Esophagus muscularis mucosa (tissue), 4 donors: ENCODE measurements at regions of chr5 and their contacts with region 1.

Region 1: DNA sequence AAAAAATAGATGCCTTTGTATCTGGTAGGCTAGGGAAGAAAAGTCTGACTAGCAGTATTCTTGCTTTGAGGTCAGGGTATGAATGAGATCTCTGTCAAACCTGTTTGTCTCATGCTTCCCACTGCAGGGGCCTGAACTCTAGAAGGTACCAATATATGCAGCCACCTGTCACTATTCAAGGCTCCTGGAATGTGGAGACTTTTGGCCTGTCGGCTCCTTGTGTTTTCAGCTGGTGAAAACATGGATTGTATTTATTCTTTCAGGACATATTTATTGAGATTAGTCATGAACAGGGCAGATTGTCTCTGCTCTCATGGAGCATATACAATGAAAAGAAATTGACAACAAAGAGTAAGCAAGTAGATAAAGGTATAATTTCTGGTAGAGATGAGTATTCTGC is 255.8 kb downstream of the ARHGAP26 start:
- DNase-seq: no peak
- H3K4me3 ChIP-seq: no peak overlapping the region
- H3K27ac ChIP-seq: no peak overlapping the region
- H3K4me1 ChIP-seq: peaks cover 19 to 35% (median 26%) of the 10 kb centered on the region in 4 donors
- H3K27me3 ChIP-seq: no peaks in the 10 kb centered on the region
- CTCF ChIP-seq: no peak
- EP300 ChIP-seq: no peak
- POLR2A ChIP-seq: no peak

Region 2: DNA sequence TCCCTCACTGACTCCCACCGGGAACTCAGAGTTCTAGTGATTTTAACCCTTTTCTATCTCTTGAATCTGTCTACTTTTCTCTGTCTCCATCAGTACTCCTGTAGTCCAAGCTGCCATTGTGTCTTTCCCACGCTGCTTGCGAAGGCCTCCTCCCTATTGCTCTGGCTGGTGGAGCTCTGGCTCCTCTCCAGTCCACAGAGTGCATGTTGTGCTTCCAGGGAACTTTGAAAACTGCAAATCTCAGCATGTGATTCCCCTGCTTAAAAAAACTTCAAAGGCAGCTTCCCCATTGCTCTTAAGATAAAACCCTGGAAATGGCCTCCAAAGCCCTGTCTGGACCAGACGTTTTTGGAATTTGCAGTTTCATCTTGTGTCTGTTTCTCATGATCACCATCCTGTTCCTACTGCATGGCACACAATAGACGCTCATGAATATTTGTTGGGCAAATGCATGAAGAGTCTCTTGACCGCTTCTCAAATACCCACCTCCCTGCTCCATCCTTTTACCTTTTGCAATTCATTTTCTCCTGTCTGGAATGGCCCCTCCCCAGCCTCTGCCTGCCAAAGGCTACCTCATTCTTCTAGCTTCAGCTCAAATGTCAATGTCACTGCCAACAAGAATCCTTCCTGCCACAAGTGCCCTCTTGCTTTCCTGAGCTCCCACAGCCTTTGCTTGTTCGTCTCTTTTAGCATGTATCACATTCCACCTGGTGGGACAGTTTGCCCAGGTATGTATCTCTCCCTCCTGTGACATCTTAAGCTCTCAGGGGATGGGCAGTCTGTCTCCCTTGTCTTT is 37.4 kb after region 1 on chr5:
- intact Hi-C with region 1: loop called (anchors 5 kb)
- DNase-seq: no peak
- H3K4me3 ChIP-seq: no peak overlapping the region
- H3K27ac ChIP-seq: peak overlapping the region; percentile 45 to 63 (median 54)
- H3K4me1 ChIP-seq: peaks cover 59 to 81% (median 75%) of the 10 kb centered on the region in 4 donors
- H3K27me3 ChIP-seq: no peaks in the 10 kb centered on the region
- CTCF ChIP-seq: no peak
- EP300 ChIP-seq: no peak
- POLR2A ChIP-seq: no peak

Region 3: DNA sequence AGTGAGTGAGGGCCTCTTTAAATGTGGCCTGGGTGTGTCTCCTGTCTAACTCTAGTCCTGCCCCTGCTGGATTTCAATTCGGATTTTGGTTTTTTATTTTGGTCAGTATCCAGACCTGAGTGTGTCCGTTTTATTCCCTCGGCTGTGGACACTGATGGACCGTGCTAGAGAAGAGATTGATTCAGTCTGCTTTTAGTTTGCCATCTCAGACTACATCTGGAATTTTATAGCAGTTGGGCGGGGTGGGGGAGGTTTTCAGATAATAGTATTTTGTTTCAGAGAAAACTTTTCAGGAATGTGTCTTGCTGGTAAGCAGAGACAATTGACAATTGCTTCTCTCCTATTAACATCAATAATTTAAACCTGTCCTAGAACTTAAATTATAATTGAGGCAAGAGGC is 52.3 kb after region 1 on chr5:
- intact Hi-C with region 1: loop called (anchors 5 kb)
- DNase-seq: no peak
- H3K4me3 ChIP-seq: no peak overlapping the region
- H3K27ac ChIP-seq: no peak overlapping the region
- H3K4me1 ChIP-seq: peaks cover 0 to 31% (median 20%) of the 10 kb centered on the region in 4 donors
- H3K27me3 ChIP-seq: no peaks in the 10 kb centered on the region
- CTCF ChIP-seq: no peak
- EP300 ChIP-seq: no peak
- POLR2A ChIP-seq: no peak